Caco-2 (cell line): ENCODE measurements at regions of chr1 and their contacts with region 1.

Region 1: DNA sequence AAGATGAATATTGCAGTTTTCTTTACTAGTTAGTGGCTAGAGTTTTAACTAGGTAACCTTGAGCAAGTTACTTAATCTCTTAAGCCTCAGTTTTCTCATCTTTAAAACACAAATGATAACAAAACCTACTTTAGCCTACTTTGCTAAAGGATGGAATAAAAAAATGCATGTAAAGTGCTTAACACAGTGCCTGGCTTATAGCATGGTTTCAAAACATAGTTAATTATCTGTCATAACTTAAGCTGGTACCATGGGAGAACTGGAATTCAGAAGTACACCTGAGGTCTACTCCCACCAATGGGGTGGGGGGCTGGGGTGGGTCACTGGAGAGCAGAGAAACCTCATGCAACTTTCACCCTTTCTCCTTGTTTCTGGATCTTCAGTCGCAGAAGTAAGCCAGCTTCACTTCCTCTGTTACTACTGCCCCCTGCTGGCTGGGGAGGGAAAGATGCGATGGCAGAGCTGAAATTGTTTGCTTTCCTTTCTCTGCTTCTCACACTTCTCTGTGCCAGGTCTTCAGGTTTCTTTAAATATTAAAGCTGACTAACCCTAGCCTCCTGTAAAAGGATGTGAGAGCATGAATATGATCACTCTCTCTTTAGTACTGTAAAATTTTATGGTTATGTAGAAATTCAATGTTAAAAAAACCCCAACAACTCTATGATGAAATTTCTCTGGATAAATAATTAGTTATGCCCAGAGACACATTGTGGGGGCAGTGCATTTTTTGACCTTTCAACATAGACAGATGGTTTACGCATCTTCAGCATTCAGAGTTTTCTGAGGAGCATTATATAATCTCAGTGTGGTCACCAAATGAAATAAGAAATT is 324.2 kb downstream of the HLX start:
- DNase-seq: peak; percentile 58 to 79
- H3K4me3 ChIP-seq: no peak overlapping the region
- H3K4me3 Mint-ChIP-seq: no peak overlapping the region
- H3K27ac Mint-ChIP-seq: no peak overlapping the region
- H3K4me1 ChIP-seq: no peaks in the 10 kb centered on the region
- H3K4me1 Mint-ChIP-seq: no peaks in the 10 kb centered on the region
- H3K27me3 ChIP-seq: no peaks in the 10 kb centered on the region
- H3K27me3 Mint-ChIP-seq: no peaks in the 10 kb centered on the region
- CTCF ChIP-seq: peak; percentile 83 to 92

Region 2: DNA sequence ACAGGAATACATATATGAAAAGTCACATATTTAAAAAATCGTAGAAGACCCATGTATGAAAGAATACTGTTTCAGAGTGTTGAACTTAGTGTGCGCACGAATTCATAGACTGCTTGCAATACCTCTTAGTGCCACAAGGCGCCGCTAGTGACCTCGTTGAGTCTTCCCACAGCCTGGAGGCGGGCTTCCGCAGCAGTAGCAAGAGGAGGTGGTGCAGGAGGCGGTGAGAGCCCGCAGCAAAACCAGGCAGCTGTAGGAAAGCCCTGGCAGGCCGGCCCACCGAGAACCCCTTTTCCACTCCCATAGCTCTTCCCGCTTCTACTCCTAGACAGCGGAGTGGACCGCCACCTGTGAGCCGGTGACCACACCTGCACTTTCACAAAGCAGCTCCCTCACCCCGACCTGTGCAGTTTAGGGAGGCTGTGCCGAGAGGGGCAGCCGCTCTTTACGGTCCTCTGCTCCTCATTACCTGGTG is 393.2 kb before region 1 on chr1:
- CTCF ChIA-PET with region 1: interaction called, 4 read pairs
- POLR2A ChIA-PET with region 1: no interaction called
- intact Hi-C with region 1: loop called (anchors 5 kb)
- DNase-seq: peak; percentile 59 to 67
- H3K4me3 ChIP-seq: no peak overlapping the region
- H3K4me3 Mint-ChIP-seq: no peak overlapping the region
- H3K27ac Mint-ChIP-seq: no peak overlapping the region
- H3K4me1 ChIP-seq: no peaks in the 10 kb centered on the region
- H3K4me1 Mint-ChIP-seq: no peaks in the 10 kb centered on the region
- H3K27me3 ChIP-seq: no peaks in the 10 kb centered on the region
- H3K27me3 Mint-ChIP-seq: no peaks in the 10 kb centered on the region
- CTCF ChIP-seq: peak; percentile 67 to 85

Region 3: DNA sequence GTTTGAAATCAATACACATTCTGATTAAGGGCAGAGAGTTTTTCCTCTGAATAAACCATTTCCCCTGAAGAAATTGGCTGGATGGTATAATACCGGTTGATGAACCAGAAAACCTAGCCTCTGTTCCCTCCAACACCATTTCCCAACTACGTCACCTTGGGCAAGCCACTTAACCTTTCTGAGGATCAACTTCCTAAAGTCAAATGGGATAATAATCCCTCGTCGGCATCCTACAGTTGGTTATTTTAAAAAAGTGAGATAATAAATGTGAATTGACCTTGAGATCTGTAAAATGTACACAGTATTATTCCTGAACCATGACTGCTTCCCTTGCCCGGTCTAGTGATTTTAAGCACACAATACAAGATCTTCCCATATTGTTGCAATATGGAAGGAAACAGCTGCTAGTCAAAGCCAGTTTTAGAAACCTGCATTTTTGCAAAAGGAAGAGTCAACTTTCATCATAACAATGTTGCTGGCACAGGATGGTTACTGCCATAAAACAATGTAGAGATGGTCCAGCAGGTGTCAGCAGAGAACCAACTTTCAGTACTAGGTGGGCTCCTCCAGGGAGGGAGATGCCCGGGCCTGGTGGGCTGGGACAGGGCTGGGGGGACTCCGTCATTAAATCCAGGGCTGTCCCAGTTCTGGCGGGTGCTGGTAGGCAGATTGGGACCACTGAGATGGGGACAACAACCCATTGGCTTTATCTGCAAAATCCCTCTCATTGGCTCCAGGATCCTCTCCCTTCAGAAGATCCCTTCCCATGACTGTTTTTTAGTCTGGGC is 329.4 kb before region 1 on chr1:
- CTCF ChIA-PET with region 1: interaction called, 4 read pairs
- POLR2A ChIA-PET with region 1: no interaction called
- intact Hi-C with region 1: loop called (anchors 1 kb)
- DNase-seq: peak in 1 of 2 experiments; percentile 39
- H3K4me3 ChIP-seq: no peak overlapping the region
- H3K4me3 Mint-ChIP-seq: no peak overlapping the region
- H3K27ac Mint-ChIP-seq: no peak overlapping the region
- H3K4me1 ChIP-seq: peaks cover 5% of the 10 kb centered on the region; the same call in 1 of the 2 replicates
- H3K4me1 Mint-ChIP-seq: no peaks in the 10 kb centered on the region
- H3K27me3 ChIP-seq: peaks cover 1% of the 10 kb centered on the region; the same call in 1 of the 2 replicates
- H3K27me3 Mint-ChIP-seq: peaks cover 16% of the 10 kb centered on the region
- CTCF ChIP-seq: peak; percentile 69 to 73

Region 4: DNA sequence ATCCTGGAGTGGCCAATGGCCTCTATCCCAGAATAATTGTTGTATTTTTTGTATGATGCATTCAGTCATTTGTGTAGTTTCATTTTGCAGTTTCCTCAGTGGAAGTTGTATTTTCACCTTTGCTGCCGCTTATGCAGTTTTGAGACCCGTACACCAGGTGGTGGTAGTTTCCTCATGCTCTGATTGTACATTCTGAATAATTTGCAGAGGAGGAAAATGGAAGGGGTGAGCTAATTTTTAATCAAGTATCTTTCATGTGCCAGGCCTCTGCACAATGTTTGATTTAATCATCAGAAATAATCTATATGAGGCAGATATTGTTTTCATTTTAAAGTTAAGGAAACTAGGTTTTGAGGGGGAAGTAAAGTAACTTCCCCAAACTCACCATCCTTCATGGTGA is 294.7 kb before region 1 on chr1:
- CTCF ChIA-PET with region 1: no interaction called
- POLR2A ChIA-PET with region 1: no interaction called
- intact Hi-C with region 1: loop called (anchors 1 kb)
- DNase-seq: no peak
- H3K4me3 ChIP-seq: no peak overlapping the region
- H3K4me3 Mint-ChIP-seq: no peak overlapping the region
- H3K27ac Mint-ChIP-seq: no peak overlapping the region
- H3K4me1 ChIP-seq: no peaks in the 10 kb centered on the region
- H3K4me1 Mint-ChIP-seq: no peaks in the 10 kb centered on the region
- H3K27me3 ChIP-seq: no peaks in the 10 kb centered on the region; the same call in 1 of the 2 replicates
- H3K27me3 Mint-ChIP-seq: peaks cover 15% of the 10 kb centered on the region
- CTCF ChIP-seq: peak; percentile 36 to 62

Region 5: DNA sequence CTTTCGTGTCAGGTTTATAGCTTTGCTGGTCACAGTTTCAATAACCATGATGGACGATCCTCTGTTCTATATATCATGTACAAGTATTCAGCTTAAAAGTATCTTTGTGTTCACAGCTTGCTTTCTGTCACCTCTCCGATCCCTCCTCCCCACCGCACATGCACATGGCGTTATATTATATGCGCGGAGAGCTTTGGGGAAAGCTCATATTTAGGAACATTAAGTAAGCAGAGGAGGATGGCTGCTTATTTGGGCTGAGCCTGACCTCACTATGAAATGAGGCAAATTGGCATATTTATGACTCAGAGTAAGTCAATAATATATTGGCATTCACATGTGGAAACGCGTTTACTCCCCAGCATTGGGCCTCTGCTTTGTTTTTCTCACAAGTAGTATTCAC is 36.4 kb after region 1 on chr1:
- CTCF ChIA-PET with region 1: no interaction called
- POLR2A ChIA-PET with region 1: no interaction called
- intact Hi-C with region 1: no loop called
- DNase-seq: no peak
- H3K4me3 ChIP-seq: no peak overlapping the region
- H3K4me3 Mint-ChIP-seq: no peak overlapping the region
- H3K27ac Mint-ChIP-seq: no peak overlapping the region
- H3K4me1 ChIP-seq: no peaks in the 10 kb centered on the region
- H3K4me1 Mint-ChIP-seq: no peaks in the 10 kb centered on the region
- H3K27me3 ChIP-seq: no peaks in the 10 kb centered on the region
- H3K27me3 Mint-ChIP-seq: no peaks in the 10 kb centered on the region
- CTCF ChIP-seq: no peak